CD8-positive, alpha-beta T cell (primary cell): ENCODE measurements at regions of chr2 and their contacts with region 1.

Region 1: GRCh38 chr2:45585267-45585861 is 25.7 kb downstream of the SRBD1 start:
- DNase-seq: peak in 3 of 9 experiments; percentile 11 to 60 (median 37)
- ATAC-seq: peak; percentile 67
- H3K4me3 ChIP-seq: no peak overlapping the region
- H3K4me3 Mint-ChIP-seq: no peak overlapping the region
- H3K27ac ChIP-seq: no peak overlapping the region
- H3K27ac Mint-ChIP-seq: no peak overlapping the region
- H3K4me1 ChIP-seq: no peaks in the 10 kb centered on the region
- H3K4me1 Mint-ChIP-seq: peaks cover 29% of the 10 kb centered on the region
- H3K27me3 ChIP-seq: no peaks in the 10 kb centered on the region
- H3K27me3 Mint-ChIP-seq: no peaks in the 10 kb centered on the region
- CTCF ChIP-seq: peak; percentile 68

Region 2: DNA sequence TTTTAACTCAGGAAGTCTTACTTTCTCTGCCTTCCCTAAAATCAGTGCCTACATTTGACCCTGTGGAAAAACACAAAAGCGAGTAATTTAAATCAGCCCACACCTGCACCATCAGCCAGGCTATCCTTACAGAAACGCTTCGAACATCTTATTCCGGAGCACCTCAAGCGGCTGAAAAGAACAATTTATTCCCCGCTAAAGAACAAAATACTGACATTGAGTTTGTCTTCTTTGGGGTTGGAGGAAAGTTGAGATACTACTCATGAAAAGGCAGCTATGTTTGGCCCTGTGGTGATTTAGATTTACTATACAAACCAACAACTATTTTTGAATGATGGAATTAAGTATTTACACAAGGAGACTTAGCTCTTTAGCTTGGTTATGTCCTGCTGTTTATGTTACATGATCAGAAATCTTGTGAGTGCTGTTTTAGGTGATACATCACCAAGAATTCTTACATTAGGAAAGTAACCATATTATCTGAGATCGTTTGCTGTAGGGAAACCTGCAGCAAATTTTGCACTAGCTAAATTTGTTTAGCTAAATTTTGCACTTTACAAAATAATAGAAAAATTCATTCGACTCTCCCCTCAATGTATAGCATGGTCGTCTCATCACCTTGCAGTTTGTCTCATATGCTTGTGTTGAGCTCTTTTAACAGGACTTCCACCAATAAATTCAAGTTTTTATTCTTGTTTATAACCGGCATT is 417.3 kb before region 1 on chr2:
- CTCF ChIA-PET with region 1: no interaction called
- POLR2A ChIA-PET with region 1: no interaction called
- intact Hi-C with region 1: no loop called
- DNase-seq: no peak
- ATAC-seq: no peak
- H3K4me3 ChIP-seq: no peak overlapping the region
- H3K4me3 Mint-ChIP-seq: no peak overlapping the region
- H3K27ac ChIP-seq: no peak overlapping the region
- H3K27ac Mint-ChIP-seq: no peak overlapping the region
- H3K4me1 ChIP-seq: no peaks in the 10 kb centered on the region
- H3K4me1 Mint-ChIP-seq: peaks cover 12% of the 10 kb centered on the region
- H3K27me3 ChIP-seq: peaks cover 3 to 8% of the 10 kb centered on the region in 2 experiments
- H3K27me3 Mint-ChIP-seq: peaks cover 51% of the 10 kb centered on the region
- CTCF ChIP-seq: no peak

Region 3: DNA sequence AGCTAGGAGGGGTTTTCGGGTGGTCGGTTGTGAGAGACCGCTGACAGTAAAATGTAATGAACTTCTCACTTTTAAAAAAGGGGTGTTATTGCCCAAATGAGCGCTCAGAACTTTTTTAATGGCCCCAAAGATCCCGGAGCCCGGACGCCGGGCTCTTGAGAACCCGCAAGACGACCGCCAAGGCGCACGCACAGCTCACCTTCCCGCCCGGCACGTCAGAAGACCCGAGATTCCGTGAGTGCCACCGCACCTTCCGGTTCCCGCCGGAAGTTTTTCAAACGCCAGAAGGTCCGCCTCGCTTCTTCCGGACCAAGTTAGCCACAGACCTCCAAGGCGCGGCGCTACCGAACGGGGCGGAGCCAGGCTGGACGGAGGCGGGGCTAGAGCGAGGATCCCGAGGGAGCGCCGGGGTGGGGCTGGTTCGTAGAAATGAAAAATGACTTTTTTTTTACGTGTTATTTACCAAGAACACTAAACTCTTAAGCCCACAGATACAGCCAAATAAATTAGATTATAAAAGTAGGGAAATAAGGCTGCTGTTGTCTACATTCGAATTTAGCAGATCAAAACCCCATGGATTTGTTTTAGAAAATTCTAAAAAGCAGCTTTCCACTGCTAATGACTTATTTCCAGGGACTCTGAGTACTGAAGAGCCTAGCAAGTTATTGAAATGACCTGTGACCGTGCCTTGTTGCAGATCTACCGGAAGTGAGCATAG is 25.8 kb after region 1 on chr2 and contains the start of gene SRBD1:
- CTCF ChIA-PET with region 1: interaction called, 3 read pairs
- POLR2A ChIA-PET with region 1: interaction called, 4 read pairs
- intact Hi-C with region 1: loop called in 1 of 2 experiments (anchors 1 kb)
- DNase-seq: peak; percentile 61 to 95 (median 85)
- ATAC-seq: peak; percentile 82
- H3K4me3 ChIP-seq: peak within 1 kb of the TSS; percentile 61 to 86
- H3K4me3 Mint-ChIP-seq: peak within 1 kb of the TSS; percentile 97
- H3K27ac ChIP-seq: peak within 1 kb of the TSS; percentile 82 to 94
- H3K27ac Mint-ChIP-seq: peak within 1 kb of the TSS; percentile 97
- H3K4me1 ChIP-seq: peaks cover 11% of the 10 kb centered on the region
- H3K4me1 Mint-ChIP-seq: peaks cover 32% of the 10 kb centered on the region
- H3K27me3 ChIP-seq: no peaks in the 10 kb centered on the region
- H3K27me3 Mint-ChIP-seq: no peaks in the 10 kb centered on the region
- CTCF ChIP-seq: no peak
- total RNA-seq, gene SRBD1: 11.1 to 11.6 TPM